ENCODE measurements at regions of chr15 and their contacts with region 1.

Region 1: GRCh38 chr15:73265536-73266153 is 103.1 kb downstream of the HCN4 start:
- DNase-seq: peak in 1 of 2 donors; percentile 61
- ATAC-seq: peak; percentile 68 to 84 (median 72)
- H3K4me3 ChIP-seq: no peak overlapping the region
- H3K4me3 Mint-ChIP-seq: no peak overlapping the region
- H3K27ac ChIP-seq: no peak overlapping the region
- H3K27ac Mint-ChIP-seq: no peak overlapping the region
- H3K4me1 ChIP-seq: no peaks in the 10 kb centered on the region
- H3K4me1 Mint-ChIP-seq: no peaks in the 10 kb centered on the region
- H3K27me3 ChIP-seq: no peaks in the 10 kb centered on the region
- H3K27me3 Mint-ChIP-seq: no peaks in the 10 kb centered on the region
- CTCF ChIP-seq: peak; percentile 61

Region 2: DNA sequence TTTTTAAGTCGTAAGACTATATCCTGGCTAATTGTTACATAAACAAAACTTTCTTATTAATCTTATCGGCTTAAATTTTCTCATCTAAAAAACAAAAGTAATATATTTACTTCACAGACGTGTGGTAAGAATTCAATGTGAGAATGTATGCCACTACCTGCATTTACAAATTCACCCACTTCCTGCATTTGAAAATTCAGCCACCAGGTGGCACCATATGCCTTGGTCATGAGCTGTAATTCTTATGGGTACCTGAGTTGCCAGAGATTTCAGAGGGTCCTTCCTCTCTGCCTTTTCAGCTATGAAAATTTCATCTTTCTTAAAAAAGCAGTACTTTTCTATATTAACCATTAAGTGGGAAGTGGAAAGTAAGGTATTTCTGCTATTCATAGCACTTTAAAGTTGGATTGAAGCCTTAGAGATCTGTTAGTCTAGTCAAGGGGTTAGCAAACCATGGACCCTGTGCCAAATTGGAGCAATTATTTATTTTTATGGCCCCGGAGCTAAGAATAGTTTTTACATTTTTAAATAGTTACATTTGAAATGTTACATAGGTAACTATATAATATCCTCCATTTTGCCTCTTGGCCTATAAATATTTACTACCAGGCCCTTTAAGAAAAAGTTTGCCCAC is 24.7 kb before region 1 on chr15:
- intact Hi-C with region 1: loop called (anchors 2 kb)
- DNase-seq: peak; percentile 57 to 81
- ATAC-seq: peak in 2 of 3 donors; percentile 40 to 66
- H3K4me3 ChIP-seq: no peak overlapping the region
- H3K4me3 Mint-ChIP-seq: no peak overlapping the region
- H3K27ac ChIP-seq: no peak overlapping the region
- H3K27ac Mint-ChIP-seq: no peak overlapping the region
- H3K4me1 ChIP-seq: no peaks in the 10 kb centered on the region
- H3K4me1 Mint-ChIP-seq: no peaks in the 10 kb centered on the region
- H3K27me3 ChIP-seq: no peaks in the 10 kb centered on the region
- H3K27me3 Mint-ChIP-seq: peaks cover 0 to 3% of the 10 kb centered on the region in 2 donors
- CTCF ChIP-seq: peak; percentile 98

Measured in natural killer cell (primary cell).